ENCODE measurements at regions of chr5 and their contacts with region 1.

Region 1: DNA sequence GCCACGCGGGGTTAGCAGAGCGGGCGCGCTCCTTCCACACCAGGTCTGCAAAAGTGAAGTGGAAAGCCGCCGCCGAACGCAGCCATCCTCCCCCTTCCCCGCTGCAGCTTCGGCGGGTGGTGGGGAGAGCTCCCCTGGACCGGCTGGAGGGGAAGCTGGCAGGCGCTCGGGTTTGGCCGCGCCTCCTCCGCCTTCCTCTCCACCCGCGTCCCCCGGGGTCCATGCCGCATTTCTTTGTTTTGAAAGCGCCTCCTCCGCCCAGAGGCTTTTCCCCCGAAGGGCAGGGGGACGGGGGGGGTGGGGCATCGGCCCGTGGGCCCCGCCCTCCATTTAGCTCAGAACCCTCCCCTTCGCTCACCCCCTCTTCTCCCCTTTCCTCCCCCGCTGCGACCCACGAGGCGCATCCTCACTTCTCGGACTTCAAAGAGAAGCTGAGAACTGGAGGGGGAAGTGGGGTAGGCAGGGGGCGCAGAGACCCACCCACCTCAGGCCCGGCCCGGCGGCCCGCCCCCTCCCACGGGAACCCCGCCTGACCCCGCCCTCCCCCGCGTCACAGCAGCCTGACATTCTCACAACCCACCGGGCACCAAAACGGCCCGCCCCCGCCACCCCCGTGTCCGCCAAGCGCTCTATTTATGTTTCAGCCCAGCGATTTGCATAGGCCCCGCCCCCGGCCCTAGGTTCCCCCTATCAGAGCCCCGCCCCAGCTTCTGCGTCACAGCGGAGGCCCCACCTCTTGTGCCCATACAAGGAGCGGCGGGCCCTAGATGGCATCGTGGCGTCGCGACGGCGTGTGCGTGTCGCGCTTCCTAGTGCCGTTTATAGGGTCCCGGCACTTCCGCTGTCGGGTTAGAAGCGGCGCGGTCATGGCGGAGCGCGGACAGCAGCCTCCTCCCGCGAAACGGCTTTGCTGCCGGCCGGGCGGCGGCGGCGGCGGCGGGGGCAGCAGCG is at the start of gene ZSWIM6:
- DNase-seq: peak; percentile 98
- H3K4me3 ChIP-seq: peak within 1 kb of the TSS; percentile 93 to 96 (median 94)
- H3K27ac ChIP-seq: peak within 1 kb of the TSS; percentile 75
- H3K4me1 ChIP-seq: peaks cover 43% of the 10 kb centered on the region
- H3K27me3 ChIP-seq: no peaks in the 10 kb centered on the region
- CTCF ChIP-seq: no peak
- total RNA-seq, gene ZSWIM6: 9.3 to 9.7 TPM

Region 2: GRCh38 chr5:60960591-60960990 is 371.1 kb before region 1 on chr5:
- CTCF ChIA-PET with region 1: no interaction called
- dilution Hi-C with region 1: no loop called
- in situ Hi-C with region 1: loop called in 1 of 2 experiments (anchors 25 kb)
- intact Hi-C with region 1: loop called (anchors 5 kb)
- DNase-seq: no peak
- H3K4me3 ChIP-seq: no peak overlapping the region
- H3K27ac ChIP-seq: no peak overlapping the region
- H3K4me1 ChIP-seq: no peaks in the 10 kb centered on the region
- H3K27me3 ChIP-seq: no peaks in the 10 kb centered on the region
- CTCF ChIP-seq: peak; percentile 51 to 56

Region 3: DNA sequence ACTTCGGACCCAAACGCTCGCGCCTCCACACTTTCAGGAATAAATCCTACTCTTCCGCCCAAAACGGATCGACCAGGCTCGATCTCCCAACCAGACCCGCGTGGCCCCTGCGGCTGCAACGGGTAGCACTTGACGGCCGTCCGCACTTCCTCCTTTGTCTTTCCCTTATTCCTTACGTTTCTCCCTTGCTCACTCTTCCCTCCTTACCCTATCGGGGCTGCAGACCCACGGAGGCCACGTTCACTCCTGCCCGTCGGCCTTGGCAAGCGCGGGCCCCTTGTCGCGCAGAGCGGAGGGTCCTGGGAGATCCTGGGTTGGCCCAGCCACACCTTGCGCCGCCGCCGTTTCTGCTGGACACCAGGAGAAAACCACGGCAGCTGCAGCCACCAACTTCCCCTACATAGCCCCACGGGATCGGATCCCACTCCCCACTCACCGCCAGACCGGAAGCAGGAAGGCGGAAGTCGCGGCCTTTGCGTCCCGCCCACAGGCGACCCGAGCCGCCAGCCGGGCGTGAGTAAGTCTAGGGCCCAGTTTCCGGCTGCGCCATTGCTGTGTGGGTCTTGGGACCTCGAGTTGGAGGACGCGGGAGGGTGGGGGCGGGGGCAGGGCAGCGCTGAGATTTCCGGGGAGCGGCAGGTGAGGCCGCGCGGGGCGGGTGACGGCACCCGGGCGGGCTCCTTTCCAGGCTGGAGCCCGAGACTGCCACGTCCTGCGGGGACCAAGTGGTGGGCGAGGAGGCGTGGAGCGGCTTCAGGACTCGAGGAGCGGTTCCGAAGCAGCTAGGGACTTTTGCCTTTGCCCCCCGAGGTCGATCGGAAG is 169.5 kb before region 1 on chr5 and contains the start of gene SMIM15:
- CTCF ChIA-PET with region 1: no interaction called
- dilution Hi-C with region 1: no loop called
- in situ Hi-C with region 1: loop called in 1 of 2 experiments (anchors 10 kb)
- intact Hi-C with region 1: loop called (anchors 1 kb)
- DNase-seq: peak; percentile 86
- H3K4me3 ChIP-seq: peak within 1 kb of the TSS; percentile 95 to 97 (median 96)
- H3K27ac ChIP-seq: peak within 1 kb of the TSS; percentile 94
- H3K4me1 ChIP-seq: peaks cover 12% of the 10 kb centered on the region
- H3K27me3 ChIP-seq: no peaks in the 10 kb centered on the region
- CTCF ChIP-seq: peak in 1 of 2 donors; percentile 0
- total RNA-seq, gene SMIM15: 36.7 to 75.0 TPM

Region 4: GRCh38 chr5:61182449-61182848 is 149.2 kb before region 1 on chr5:
- CTCF ChIA-PET with region 1: interaction called, 19 read pairs
- dilution Hi-C with region 1: no loop called
- in situ Hi-C with region 1: no loop called
- intact Hi-C with region 1: no loop called
- DNase-seq: no peak
- H3K4me3 ChIP-seq: no peak overlapping the region
- H3K27ac ChIP-seq: no peak overlapping the region
- H3K4me1 ChIP-seq: no peaks in the 10 kb centered on the region
- H3K27me3 ChIP-seq: no peaks in the 10 kb centered on the region
- CTCF ChIP-seq: no peak

Region 5: GRCh38 chr5:61301341-61302199 is 30.1 kb before region 1 on chr5:
- CTCF ChIA-PET with region 1: interaction called, 4 read pairs
- dilution Hi-C with region 1: no loop called
- in situ Hi-C with region 1: no loop called
- intact Hi-C with region 1: loop called (anchors 1 kb)
- DNase-seq: peak; percentile 97
- H3K4me3 ChIP-seq: no peak overlapping the region
- H3K27ac ChIP-seq: peak overlapping the region; percentile 78
- H3K4me1 ChIP-seq: peaks cover 72% of the 10 kb centered on the region
- H3K27me3 ChIP-seq: no peaks in the 10 kb centered on the region
- CTCF ChIP-seq: no peak

Region 6: GRCh38 chr5:61468993-61469392 is 137.3 kb after region 1 on chr5:
- CTCF ChIA-PET with region 1: no interaction called
- dilution Hi-C with region 1: no loop called
- in situ Hi-C with region 1: no loop called
- intact Hi-C with region 1: loop called (anchors 1 kb)
- DNase-seq: no peak
- H3K4me3 ChIP-seq: no peak overlapping the region
- H3K27ac ChIP-seq: no peak overlapping the region
- H3K4me1 ChIP-seq: no peaks in the 10 kb centered on the region
- H3K27me3 ChIP-seq: no peaks in the 10 kb centered on the region
- CTCF ChIP-seq: no peak

Region 7: GRCh38 chr5:61919920-61920319 is 588.2 kb after region 1 on chr5:
- CTCF ChIA-PET with region 1: no interaction called
- dilution Hi-C with region 1: no loop called
- in situ Hi-C with region 1: no loop called
- intact Hi-C with region 1: loop called (anchors 5 kb)
- DNase-seq: peak; percentile 94
- H3K4me3 ChIP-seq: no peak overlapping the region
- H3K27ac ChIP-seq: peak overlapping the region; percentile 100
- H3K4me1 ChIP-seq: peaks cover 61% of the 10 kb centered on the region
- H3K27me3 ChIP-seq: no peaks in the 10 kb centered on the region
- CTCF ChIP-seq: no peak